CD4-positive, alpha-beta memory T cell (primary cell): ENCODE measurements at regions of chr3 and their contacts with region 1.

Region 1: GRCh38 chr3:32467333-32468070 is 35.1 kb downstream of the CMTM6 start:
- DNase-seq: peak; percentile 65 to 82 (median 75)
- H3K4me3 ChIP-seq: peak overlapping the region in 1 of 2 donors; percentile 58
- H3K4me3 Mint-ChIP-seq: peak overlapping the region in 7 of 8 donors; percentile 22 to 69 (median 45)
- H3K27ac ChIP-seq: peak overlapping the region; percentile 52
- H3K27ac Mint-ChIP-seq: peak overlapping the region; percentile 29 to 81 (median 76)
- H3K4me1 ChIP-seq: peaks cover 40% of the 10 kb centered on the region
- H3K4me1 Mint-ChIP-seq: peaks cover 23 to 64% (median 48%) of the 10 kb centered on the region in 4 donors
- H3K27me3 ChIP-seq: no peaks in the 10 kb centered on the region
- H3K27me3 Mint-ChIP-seq: no peaks in the 10 kb centered on the region

Region 2: GRCh38 chr3:31550452-31551251 is 916.9 kb before region 1 on chr3:
- CTCF ChIA-PET with region 1: no interaction called
- POLR2A ChIA-PET with region 1: no interaction called
- intact Hi-C with region 1: no loop called
- DNase-seq: peak in 4 of 5 donors; percentile 28 to 40 (median 37)
- H3K4me3 ChIP-seq: no peak overlapping the region
- H3K4me3 Mint-ChIP-seq: peak overlapping the region; percentile 6 to 66 (median 46)
- H3K27ac ChIP-seq: no peak overlapping the region
- H3K27ac Mint-ChIP-seq: peak overlapping the region in 4 of 7 donors; percentile 37 to 85 (median 43)
- H3K4me1 ChIP-seq: peaks cover 84% of the 10 kb centered on the region
- H3K4me1 Mint-ChIP-seq: peaks cover 68 to 93% (median 81%) of the 10 kb centered on the region in 4 donors
- H3K27me3 ChIP-seq: no peaks in the 10 kb centered on the region
- H3K27me3 Mint-ChIP-seq: no peaks in the 10 kb centered on the region

Region 3: DNA sequence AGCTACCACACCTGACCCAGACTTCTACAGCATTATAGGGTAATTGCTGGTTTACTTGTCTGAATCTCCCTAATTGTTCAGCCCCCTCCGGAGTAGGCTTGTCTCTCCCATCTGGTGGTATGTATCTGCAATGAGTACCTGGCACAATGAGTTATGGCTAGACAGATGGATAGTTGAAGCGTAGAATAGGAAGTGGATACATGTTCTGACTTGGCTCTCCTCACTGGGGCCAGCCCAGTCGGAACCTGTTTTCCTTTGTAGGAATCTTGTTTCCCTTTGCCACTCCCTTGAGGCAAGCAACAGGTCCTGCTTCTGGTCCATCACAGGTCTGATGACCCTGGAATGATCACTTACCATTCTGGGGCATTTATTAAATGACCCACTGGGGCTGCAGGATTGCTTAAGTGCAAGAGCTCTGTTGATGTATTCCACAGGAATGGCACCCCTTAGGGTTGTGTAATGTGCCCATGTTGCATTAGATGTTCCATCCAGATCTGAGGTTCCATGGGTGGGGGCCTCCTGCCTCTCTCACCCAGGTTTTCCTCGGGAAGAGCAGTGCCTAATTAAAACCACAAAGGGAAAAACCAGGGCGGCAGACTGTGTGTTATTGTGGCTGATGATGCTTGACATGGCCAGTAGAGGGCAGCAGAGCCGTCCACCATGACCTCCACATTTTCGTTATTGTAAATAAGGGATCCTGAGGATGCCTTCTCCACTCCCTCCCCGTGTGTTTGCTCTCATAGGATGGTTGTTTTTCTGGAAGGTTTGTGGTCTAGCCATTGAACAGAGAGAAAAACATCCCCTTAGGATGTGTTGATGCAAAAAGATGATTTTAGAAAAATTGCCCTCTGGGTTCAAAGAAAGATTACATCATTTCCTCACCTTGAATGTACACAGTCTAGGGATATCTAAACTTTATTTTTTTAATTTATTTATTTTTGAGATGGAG is 171.0 kb before region 1 on chr3:
- CTCF ChIA-PET with region 1: interaction called, 26 read pairs
- POLR2A ChIA-PET with region 1: no interaction called
- intact Hi-C with region 1: loop called (anchors 1 kb)
- DNase-seq: peak; percentile 61 to 73 (median 68)
- H3K4me3 ChIP-seq: no peak overlapping the region
- H3K4me3 Mint-ChIP-seq: peak overlapping the region; percentile 49 to 86 (median 71)
- H3K27ac ChIP-seq: peak overlapping the region; percentile 63
- H3K27ac Mint-ChIP-seq: peak overlapping the region; percentile 81 to 97 (median 93)
- H3K4me1 ChIP-seq: peaks cover 52% of the 10 kb centered on the region
- H3K4me1 Mint-ChIP-seq: peaks cover 34 to 65% (median 48%) of the 10 kb centered on the region in 4 donors
- H3K27me3 ChIP-seq: no peaks in the 10 kb centered on the region
- H3K27me3 Mint-ChIP-seq: no peaks in the 10 kb centered on the region

Region 4: DNA sequence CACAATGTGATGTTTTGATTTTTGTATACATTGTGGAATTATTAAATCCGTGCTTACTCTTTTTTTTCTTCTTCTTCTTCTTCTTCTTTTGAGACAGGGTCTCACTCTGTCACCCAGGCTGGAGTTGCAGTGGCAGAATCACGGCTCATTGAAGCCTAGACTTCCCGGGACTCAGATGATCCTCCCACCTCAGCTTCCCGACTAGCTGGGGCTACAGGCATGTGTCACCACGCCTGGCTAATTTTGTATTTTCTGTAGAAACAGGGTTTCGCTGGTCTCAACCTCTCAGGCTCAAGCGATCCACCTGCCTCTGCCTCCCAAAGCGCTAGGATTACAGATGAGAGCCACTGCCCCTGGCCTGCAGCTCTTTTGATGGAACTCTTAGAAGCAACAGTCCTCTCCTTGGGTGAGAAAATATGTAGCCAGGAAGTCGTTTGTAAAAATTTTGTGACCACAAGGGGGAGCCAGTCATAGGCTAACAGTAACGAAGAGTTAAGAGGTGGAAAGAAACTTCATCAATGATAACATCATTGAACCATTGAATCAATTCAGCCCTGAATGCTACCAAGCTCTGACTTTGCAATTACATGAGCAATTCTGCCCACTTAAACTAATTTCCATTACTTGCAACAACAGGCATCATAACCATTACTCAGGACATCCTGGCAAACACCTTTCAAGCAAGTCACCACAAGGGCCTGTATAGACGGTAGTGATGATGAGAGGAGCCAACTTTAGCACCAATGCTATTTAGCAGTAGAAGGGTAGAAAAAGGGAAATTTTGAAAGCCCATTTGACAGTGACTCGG is 92.5 kb before region 1 on chr3:
- CTCF ChIA-PET with region 1: interaction called, 221 read pairs
- POLR2A ChIA-PET with region 1: interaction called, 20 read pairs
- intact Hi-C with region 1: loop called (anchors 1 kb)
- DNase-seq: peak; percentile 74 to 78 (median 78)
- H3K4me3 ChIP-seq: no peak overlapping the region
- H3K4me3 Mint-ChIP-seq: peak overlapping the region in 1 of 8 donors; percentile 21
- H3K27ac ChIP-seq: no peak overlapping the region
- H3K27ac Mint-ChIP-seq: peak overlapping the region in 5 of 7 donors; percentile 18 to 70 (median 33)
- H3K4me1 ChIP-seq: peaks cover 21% of the 10 kb centered on the region
- H3K4me1 Mint-ChIP-seq: peaks cover 18 to 28% (median 24%) of the 10 kb centered on the region in 4 donors
- H3K27me3 ChIP-seq: no peaks in the 10 kb centered on the region
- H3K27me3 Mint-ChIP-seq: no peaks in the 10 kb centered on the region

Region 5: GRCh38 chr3:32401556-32402081 is 65.9 kb before region 1 on chr3:
- CTCF ChIA-PET with region 1: interaction called, 208 read pairs
- POLR2A ChIA-PET with region 1: interaction called, 9 read pairs
- intact Hi-C with region 1: loop called (anchors 1 kb)
- DNase-seq: peak; percentile 60 to 75 (median 67)
- H3K4me3 ChIP-seq: peak overlapping the region; percentile 61 to 68
- H3K4me3 Mint-ChIP-seq: peak overlapping the region; percentile 87 to 95 (median 94)
- H3K27ac ChIP-seq: peak overlapping the region; percentile 84
- H3K27ac Mint-ChIP-seq: peak overlapping the region; percentile 95 to 100 (median 99)
- H3K4me1 ChIP-seq: peaks cover 72% of the 10 kb centered on the region
- H3K4me1 Mint-ChIP-seq: peaks cover 53 to 84% (median 69%) of the 10 kb centered on the region in 4 donors
- H3K27me3 ChIP-seq: no peaks in the 10 kb centered on the region
- H3K27me3 Mint-ChIP-seq: no peaks in the 10 kb centered on the region

Region 6: DNA sequence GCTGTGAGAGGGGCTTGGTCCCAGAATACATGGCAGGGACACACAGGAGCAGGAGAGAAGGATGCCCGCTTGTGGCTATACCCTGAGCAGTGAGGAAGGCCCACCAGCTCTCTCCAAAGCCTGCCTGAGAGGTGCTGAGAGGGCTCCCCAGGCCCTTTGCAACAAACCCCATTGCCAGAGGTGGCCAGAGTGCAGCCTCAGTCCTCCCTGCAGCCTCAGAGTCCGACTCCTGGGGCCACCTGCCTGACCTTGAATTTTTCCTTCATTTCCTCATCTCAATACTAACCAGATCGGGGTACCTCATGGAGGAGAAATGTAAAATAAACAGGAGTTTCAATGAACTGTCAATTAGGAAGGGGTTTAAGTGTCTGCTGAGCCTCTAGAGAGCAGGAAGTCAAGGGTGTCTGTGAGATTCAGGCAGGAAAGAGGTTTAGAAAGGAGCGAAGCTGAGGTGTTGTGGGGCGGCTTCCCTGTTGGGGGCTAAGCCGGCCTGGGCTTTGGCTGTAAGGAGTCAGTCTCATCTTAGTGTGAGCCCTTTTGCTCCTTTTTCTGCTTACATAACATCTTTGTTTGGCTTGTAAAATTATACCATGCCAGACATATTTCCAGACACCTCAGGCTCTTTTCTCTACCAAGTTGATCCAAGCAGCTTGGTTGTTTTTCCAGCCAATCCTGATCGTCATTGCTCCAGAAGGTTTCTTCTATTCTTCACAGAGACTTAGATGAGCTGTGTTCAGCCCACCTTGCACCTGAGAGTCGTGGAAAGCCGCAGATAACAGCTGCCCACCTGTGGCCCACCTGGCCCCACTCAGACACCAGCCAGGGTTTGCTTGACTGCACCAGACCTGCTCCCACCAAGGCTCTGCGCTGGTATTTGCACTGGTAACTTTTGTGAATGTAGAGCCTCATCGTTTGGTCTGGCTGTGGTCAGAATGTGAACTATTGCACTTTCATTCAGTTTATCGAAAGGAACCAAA is 39.1 kb before region 1 on chr3:
- CTCF ChIA-PET with region 1: interaction called, 37 read pairs
- POLR2A ChIA-PET with region 1: interaction called, 415 read pairs
- intact Hi-C with region 1: no loop called
- DNase-seq: peak; percentile 49 to 68 (median 53)
- H3K4me3 ChIP-seq: peak overlapping the region; percentile 4 to 21
- H3K4me3 Mint-ChIP-seq: peak overlapping the region; percentile 59 to 88 (median 78)
- H3K27ac ChIP-seq: peak overlapping the region; percentile 64
- H3K27ac Mint-ChIP-seq: peak overlapping the region; percentile 90 to 98 (median 97)
- H3K4me1 ChIP-seq: peaks cover 96% of the 10 kb centered on the region
- H3K4me1 Mint-ChIP-seq: peaks cover 69 to 98% (median 85%) of the 10 kb centered on the region in 4 donors
- H3K27me3 ChIP-seq: no peaks in the 10 kb centered on the region
- H3K27me3 Mint-ChIP-seq: no peaks in the 10 kb centered on the region

Region 7: GRCh38 chr3:32502118-32502945 is 34.8 kb after region 1 on chr3 and contains the start of gene CMTM6:
- CTCF ChIA-PET with region 1: interaction called, 16 read pairs
- POLR2A ChIA-PET with region 1: no interaction called
- intact Hi-C with region 1: loop called (anchors 5 kb)
- DNase-seq: peak; percentile 69 to 80 (median 74)
- H3K4me3 ChIP-seq: peak within 1 kb of the TSS; percentile 82 to 89
- H3K4me3 Mint-ChIP-seq: peak within 1 kb of the TSS; percentile 91 to 99 (median 96)
- H3K27ac ChIP-seq: peak within 1 kb of the TSS; percentile 98
- H3K27ac Mint-ChIP-seq: peak within 1 kb of the TSS; percentile 77 to 99 (median 98)
- H3K4me1 ChIP-seq: peaks cover 46% of the 10 kb centered on the region
- H3K4me1 Mint-ChIP-seq: peaks cover 24 to 51% (median 36%) of the 10 kb centered on the region in 4 donors
- H3K27me3 ChIP-seq: no peaks in the 10 kb centered on the region
- H3K27me3 Mint-ChIP-seq: no peaks in the 10 kb centered on the region
- total RNA-seq, gene CMTM6: 30.3 to 34.8 TPM

Region 8: GRCh38 chr3:33113772-33114621 is 646.5 kb after region 1 on chr3 and contains the start of gene CRTAP:
- CTCF ChIA-PET with region 1: no interaction called
- POLR2A ChIA-PET with region 1: no interaction called
- intact Hi-C with region 1: no loop called
- DNase-seq: peak; percentile 85 to 88 (median 87)
- H3K4me3 ChIP-seq: peak within 1 kb of the TSS; percentile 71 to 83
- H3K4me3 Mint-ChIP-seq: peak within 1 kb of the TSS; percentile 83 to 92 (median 89)
- H3K27ac ChIP-seq: peak within 1 kb of the TSS; percentile 55
- H3K27ac Mint-ChIP-seq: peak within 1 kb of the TSS; percentile 75 to 94 (median 91)
- H3K4me1 ChIP-seq: peaks cover 42% of the 10 kb centered on the region
- H3K4me1 Mint-ChIP-seq: peaks cover 32 to 65% (median 48%) of the 10 kb centered on the region in 4 donors
- H3K27me3 ChIP-seq: no peaks in the 10 kb centered on the region
- H3K27me3 Mint-ChIP-seq: no peaks in the 10 kb centered on the region
- total RNA-seq, gene CRTAP: 75.4 to 84.4 TPM